K562 (cell line): ENCODE measurements at regions of chr1 and their contacts with region 1.

Region 1: GRCh38 chr1:166730299-166730888 is 108.9 kb upstream of the POGK start:
- DNase-seq: peak; percentile 31 to 91 (median 66)
- ATAC-seq: peak; percentile 100
- H3K4me3 ChIP-seq: no peak overlapping the region
- H3K27ac ChIP-seq: peak overlapping the region; percentile 43
- H3K4me1 ChIP-seq: peaks cover 9 to 11% of the 10 kb centered on the region in 2 experiments; a peak in 4 of 5 replicates
- H3K27me3 ChIP-seq: no peaks in the 10 kb centered on the region
- CTCF ChIP-seq: peak; percentile 62 to 83 (median 64)
- EP300 ChIP-seq: no peak
- POLR2A ChIP-seq: no peak
- RAD21 ChIP-seq: peak; percentile 86 to 92

Region 2: DNA sequence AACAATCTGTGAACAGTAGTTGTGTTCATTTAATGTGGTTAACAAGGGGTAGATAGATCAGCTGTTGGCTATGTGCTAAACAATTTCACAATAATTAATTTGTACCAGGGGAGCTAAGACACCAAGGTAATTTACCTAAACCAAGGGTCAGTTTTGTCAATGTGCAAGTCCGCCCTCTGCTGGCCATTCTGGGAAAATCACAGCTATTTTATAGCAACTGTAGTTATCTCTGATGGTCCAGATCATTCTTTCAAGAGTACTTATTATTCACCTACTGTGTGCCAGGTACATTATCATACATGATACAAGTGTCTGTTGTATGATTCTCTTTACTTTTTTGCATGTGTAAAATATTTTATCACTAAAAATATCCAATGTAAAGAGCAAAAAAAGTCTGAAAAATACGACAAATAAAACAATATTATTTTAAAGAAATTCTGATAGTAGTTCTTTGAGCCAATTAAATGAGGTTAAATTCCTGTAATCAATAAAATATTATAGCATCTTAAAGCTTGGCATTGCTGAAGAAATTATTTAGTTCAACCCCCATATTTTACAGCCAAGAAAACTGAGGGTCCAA is 251.3 kb before region 1 on chr1:
- CTCF ChIA-PET with region 1: interaction called, 4 read pairs
- POLR2A ChIA-PET with region 1: interaction called, 4 read pairs
- in situ Hi-C with region 1: loop called (anchors 10 kb)
- intact Hi-C with region 1: loop called (anchors 2 kb)
- DNase-seq: peak; percentile 54 to 80 (median 64)
- ATAC-seq: peak; percentile 81
- H3K4me3 ChIP-seq: no peak overlapping the region
- H3K27ac ChIP-seq: no peak overlapping the region
- H3K4me1 ChIP-seq: peaks cover 0 to 7% of the 10 kb centered on the region in 2 experiments; a peak in 4 of 5 replicates
- H3K27me3 ChIP-seq: no peaks in the 10 kb centered on the region
- CTCF ChIP-seq: peak; percentile 68 to 78 (median 75)
- EP300 ChIP-seq: no peak
- POLR2A ChIP-seq: no peak
- RAD21 ChIP-seq: peak; percentile 65 to 78

Region 3: GRCh38 chr1:166588741-166589140 is 141.7 kb before region 1 on chr1:
- CTCF ChIA-PET with region 1: no interaction called
- POLR2A ChIA-PET with region 1: no interaction called
- in situ Hi-C with region 1: no loop called
- intact Hi-C with region 1: loop called (anchors 5 kb)
- DNase-seq: no peak
- ATAC-seq: no peak
- H3K4me3 ChIP-seq: no peak overlapping the region
- H3K27ac ChIP-seq: no peak overlapping the region
- H3K4me1 ChIP-seq: peaks cover 9 to 25% of the 10 kb centered on the region in 2 experiments
- H3K27me3 ChIP-seq: no peaks in the 10 kb centered on the region
- CTCF ChIP-seq: no peak
- EP300 ChIP-seq: no peak
- POLR2A ChIP-seq: no peak
- RAD21 ChIP-seq: no peak

Region 4: GRCh38 chr1:166676981-166677380 is 53.4 kb before region 1 on chr1:
- CTCF ChIA-PET with region 1: no interaction called
- POLR2A ChIA-PET with region 1: no interaction called
- in situ Hi-C with region 1: no loop called
- intact Hi-C with region 1: loop called (anchors 5 kb)
- DNase-seq: peak in 2 of 4 experiments; percentile 24
- ATAC-seq: peak; percentile 59; the same call in 1 of the 3 replicates
- H3K4me3 ChIP-seq: no peak overlapping the region
- H3K27ac ChIP-seq: no peak overlapping the region
- H3K4me1 ChIP-seq: peaks cover 5 to 17% of the 10 kb centered on the region in 2 experiments
- H3K27me3 ChIP-seq: no peaks in the 10 kb centered on the region
- CTCF ChIP-seq: peak; percentile 24 to 53 (median 25); a peak in 3 of 6 replicates
- EP300 ChIP-seq: no peak
- POLR2A ChIP-seq: no peak
- RAD21 ChIP-seq: peak; percentile 10 to 34; a peak in 1 of 4 replicates

Region 5: DNA sequence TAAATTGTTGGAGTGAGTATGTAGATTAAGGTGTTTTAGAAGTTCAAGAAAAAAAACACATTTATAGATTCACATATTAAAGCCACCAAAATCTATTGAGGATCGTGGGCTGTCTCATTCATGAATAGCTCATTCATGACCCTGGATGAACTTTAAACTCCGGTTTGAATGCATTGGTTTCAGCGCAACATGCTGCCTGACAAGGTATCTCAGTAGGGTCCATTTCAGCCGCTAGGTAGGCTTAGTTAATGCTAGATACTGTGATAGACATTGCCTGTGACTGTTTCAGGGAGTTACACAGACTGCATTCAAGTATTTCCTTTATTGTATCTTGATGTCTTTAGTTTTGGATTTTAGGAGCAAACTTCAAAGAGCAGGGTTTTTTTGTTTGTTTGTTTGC is 31.6 kb before region 1 on chr1:
- CTCF ChIA-PET with region 1: no interaction called
- POLR2A ChIA-PET with region 1: no interaction called
- in situ Hi-C with region 1: no loop called
- intact Hi-C with region 1: loop called (anchors 1 kb)
- DNase-seq: peak in 2 of 4 experiments; percentile 49 to 63
- ATAC-seq: peak; percentile 75
- H3K4me3 ChIP-seq: no peak overlapping the region
- H3K27ac ChIP-seq: no peak overlapping the region; the same call in 2 of the 3 replicates
- H3K4me1 ChIP-seq: peaks cover 11 to 72% of the 10 kb centered on the region in 2 experiments; a peak in 4 of 5 replicates
- H3K27me3 ChIP-seq: no peaks in the 10 kb centered on the region
- CTCF ChIP-seq: no peak
- EP300 ChIP-seq: no peak
- POLR2A ChIP-seq: no peak
- RAD21 ChIP-seq: no peak

Region 6: GRCh38 chr1:166705376-166706289 is 24.8 kb before region 1 on chr1:
- CTCF ChIA-PET with region 1: no interaction called
- POLR2A ChIA-PET with region 1: interaction called, 3 read pairs
- in situ Hi-C with region 1: no loop called
- intact Hi-C with region 1: loop called (anchors 1 kb)
- DNase-seq: peak; percentile 90 to 97 (median 94)
- ATAC-seq: peak; percentile 92
- H3K4me3 ChIP-seq: no peak overlapping the region
- H3K27ac ChIP-seq: peak overlapping the region; percentile 83
- H3K4me1 ChIP-seq: peaks cover 8 to 56% of the 10 kb centered on the region in 2 experiments
- H3K27me3 ChIP-seq: no peaks in the 10 kb centered on the region
- CTCF ChIP-seq: no peak
- EP300 ChIP-seq: peak; percentile 100
- POLR2A ChIP-seq: no peak
- RAD21 ChIP-seq: peak; percentile 21 to 30; a peak in 2 of 4 replicates

Region 7: GRCh38 chr1:166766934-166767333 is 36.5 kb after region 1 on chr1:
- CTCF ChIA-PET with region 1: no interaction called
- POLR2A ChIA-PET with region 1: no interaction called
- in situ Hi-C with region 1: loop called (anchors 5 kb)
- intact Hi-C with region 1: no loop called
- DNase-seq: no peak
- ATAC-seq: no peak
- H3K4me3 ChIP-seq: no peak overlapping the region
- H3K27ac ChIP-seq: no peak overlapping the region
- H3K4me1 ChIP-seq: no peaks in the 10 kb centered on the region
- H3K27me3 ChIP-seq: peaks cover 0 to 7% of the 10 kb centered on the region in 2 experiments; a peak in 1 of 5 replicates
- CTCF ChIP-seq: no peak
- EP300 ChIP-seq: no peak
- POLR2A ChIP-seq: no peak
- RAD21 ChIP-seq: no peak

Region 8: DNA sequence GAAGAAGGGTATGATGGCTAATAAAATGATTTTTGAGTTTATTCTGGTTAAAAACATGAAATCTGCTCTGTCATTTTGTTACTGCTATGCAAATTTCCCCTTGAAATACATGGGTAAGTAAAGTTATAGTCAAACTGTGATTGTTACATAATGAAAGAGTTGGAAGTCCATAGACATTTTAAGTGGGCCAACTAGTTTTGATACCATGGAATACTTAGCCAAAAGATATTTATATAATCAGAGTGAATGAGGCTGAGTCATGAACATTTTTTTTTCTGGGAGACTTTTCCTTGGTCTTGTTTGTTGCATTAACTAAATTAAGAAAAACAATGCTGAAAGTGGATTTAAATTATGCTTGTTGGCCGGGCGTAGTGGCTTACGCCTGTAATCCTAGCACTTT is 1264.6 kb after region 1 on chr1:
- CTCF ChIA-PET with region 1: no interaction called
- POLR2A ChIA-PET with region 1: no interaction called
- in situ Hi-C with region 1: no loop called
- intact Hi-C with region 1: no loop called
- DNase-seq: no peak
- ATAC-seq: no peak
- H3K4me3 ChIP-seq: no peak overlapping the region
- H3K27ac ChIP-seq: no peak overlapping the region
- H3K4me1 ChIP-seq: no peaks in the 10 kb centered on the region
- H3K27me3 ChIP-seq: no peaks in the 10 kb centered on the region
- CTCF ChIP-seq: no peak
- EP300 ChIP-seq: no peak
- POLR2A ChIP-seq: no peak
- RAD21 ChIP-seq: no peak